Gastrocnemius medialis (tissue), 4 donors: ENCODE measurements at regions of chr11 and their contacts with region 1.

Region 1: DNA sequence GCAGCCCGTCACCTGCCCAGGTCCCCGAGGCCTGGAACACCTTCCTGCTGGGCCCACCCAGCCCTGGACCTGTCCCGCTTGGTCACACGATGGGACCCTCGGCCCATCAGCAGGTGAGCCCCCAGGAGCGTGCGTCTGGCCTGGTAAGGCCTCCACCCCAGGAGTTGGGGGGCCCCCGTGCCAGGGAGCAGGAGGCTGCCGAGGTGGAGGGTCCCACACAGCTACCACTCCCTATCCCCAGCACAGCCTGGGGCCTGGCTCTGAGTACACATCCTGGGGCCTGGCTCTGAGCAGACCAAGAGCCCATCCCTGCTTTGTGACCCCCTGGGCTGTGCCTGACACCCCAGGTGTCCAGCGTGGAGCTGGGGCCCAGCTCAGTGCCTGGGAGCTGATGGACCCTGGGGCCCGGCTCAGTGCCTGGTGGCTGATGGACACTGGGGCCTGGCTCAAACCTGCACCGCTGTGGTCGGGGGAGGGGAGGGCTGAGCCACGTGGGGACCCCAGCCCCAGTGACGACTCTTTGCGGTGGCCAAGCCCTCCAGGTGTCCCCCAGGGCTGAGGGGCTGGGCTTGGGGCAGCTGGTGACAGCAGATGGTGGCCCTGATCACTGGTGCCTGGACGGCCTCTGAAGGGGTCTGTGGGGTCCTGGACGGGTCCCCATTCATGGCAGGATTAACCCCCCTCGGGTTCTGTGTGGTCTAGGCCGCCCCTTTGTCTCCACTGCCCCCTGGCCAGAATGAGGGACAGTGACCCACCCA is 3.6 kb upstream of the MUC5B start:
- DNase-seq: no peak
- ATAC-seq: no peak
- H3K4me3 ChIP-seq: no peak overlapping the region
- H3K27ac ChIP-seq: no peak overlapping the region
- H3K4me1 ChIP-seq: no peaks in the 10 kb centered on the region
- H3K27me3 ChIP-seq: peaks cover 43 to 62% (median 47%) of the 10 kb centered on the region in 3 donors
- CTCF ChIP-seq: no peak
- POLR2A ChIP-seq: no peak

Region 2: GRCh38 chr11:1236316-1237127 is 17.3 kb after region 1 on chr11:
- in situ Hi-C with region 1: no loop called
- intact Hi-C with region 1: loop called (anchors 1 kb)
- DNase-seq: no peak
- ATAC-seq: no peak
- H3K4me3 ChIP-seq: no peak overlapping the region
- H3K27ac ChIP-seq: no peak overlapping the region
- H3K4me1 ChIP-seq: no peaks in the 10 kb centered on the region
- H3K27me3 ChIP-seq: peaks cover 0 to 4% (median 0%) of the 10 kb centered on the region in 3 donors
- CTCF ChIP-seq: no peak
- POLR2A ChIP-seq: no peak

Region 3: DNA sequence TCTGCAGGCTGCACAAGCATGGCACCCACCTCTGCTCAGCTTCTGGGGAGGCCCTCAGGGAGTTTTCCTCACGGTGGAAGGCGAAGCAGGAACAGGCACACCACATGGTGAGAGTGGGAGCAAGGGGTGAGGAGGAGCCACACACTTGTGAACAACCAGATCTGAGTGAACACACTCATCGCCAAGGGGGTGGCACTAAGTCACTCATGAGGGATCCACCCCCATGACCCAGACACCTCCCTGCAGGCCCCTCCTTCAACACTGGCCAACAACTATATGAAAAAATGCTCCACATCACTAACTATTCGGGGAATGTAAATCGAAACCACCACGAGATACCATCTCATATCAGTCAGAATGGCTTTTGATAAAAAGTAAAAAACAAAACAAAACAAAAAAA is 379.6 kb after region 1 on chr11:
- in situ Hi-C with region 1: no loop called
- intact Hi-C with region 1: no loop called
- DNase-seq: no peak
- ATAC-seq: no peak
- H3K4me3 ChIP-seq: no peak overlapping the region
- H3K27ac ChIP-seq: no peak overlapping the region
- H3K4me1 ChIP-seq: no peaks in the 10 kb centered on the region
- H3K27me3 ChIP-seq: peaks cover 0 to 6% (median 0%) of the 10 kb centered on the region in 3 donors
- CTCF ChIP-seq: no peak
- POLR2A ChIP-seq: no peak